Keratinocyte (primary cell): ENCODE measurements at regions of chr5 and their contacts with region 1.

Region 1: GRCh38 chr5:148909040-148909439 is 82.6 kb downstream of the ADRB2 start:
- DNase-seq: no peak
- H3K4me3 ChIP-seq: no peak overlapping the region
- H3K27ac ChIP-seq: peak overlapping the region; percentile 19
- H3K4me1 ChIP-seq: peaks cover 50% of the 10 kb centered on the region
- H3K27me3 ChIP-seq: no peaks in the 10 kb centered on the region
- CTCF ChIP-seq: no peak

Region 2: GRCh38 chr5:148939676-148940075 is 30.6 kb after region 1 on chr5:
- dilution Hi-C with region 1: no loop called
- DNase-seq: no peak
- H3K4me3 ChIP-seq: no peak overlapping the region
- H3K27ac ChIP-seq: peak overlapping the region; percentile 85
- H3K4me1 ChIP-seq: peaks cover 38% of the 10 kb centered on the region
- H3K27me3 ChIP-seq: no peaks in the 10 kb centered on the region
- CTCF ChIP-seq: no peak

Region 3: GRCh38 chr5:148991606-148992005 is 82.6 kb after region 1 on chr5:
- dilution Hi-C with region 1: no loop called
- DNase-seq: no peak
- H3K4me3 ChIP-seq: no peak overlapping the region
- H3K27ac ChIP-seq: peak overlapping the region; percentile 86
- H3K4me1 ChIP-seq: peaks cover 51% of the 10 kb centered on the region
- H3K27me3 ChIP-seq: no peaks in the 10 kb centered on the region
- CTCF ChIP-seq: no peak

Region 4: GRCh38 chr5:149002053-149002452 is 93.0 kb after region 1 on chr5:
- dilution Hi-C with region 1: loop called (anchors 5 kb)
- DNase-seq: no peak
- H3K4me3 ChIP-seq: no peak overlapping the region
- H3K27ac ChIP-seq: peak overlapping the region; percentile 34
- H3K4me1 ChIP-seq: peaks cover 25% of the 10 kb centered on the region
- H3K27me3 ChIP-seq: no peaks in the 10 kb centered on the region
- CTCF ChIP-seq: no peak

Region 5: DNA sequence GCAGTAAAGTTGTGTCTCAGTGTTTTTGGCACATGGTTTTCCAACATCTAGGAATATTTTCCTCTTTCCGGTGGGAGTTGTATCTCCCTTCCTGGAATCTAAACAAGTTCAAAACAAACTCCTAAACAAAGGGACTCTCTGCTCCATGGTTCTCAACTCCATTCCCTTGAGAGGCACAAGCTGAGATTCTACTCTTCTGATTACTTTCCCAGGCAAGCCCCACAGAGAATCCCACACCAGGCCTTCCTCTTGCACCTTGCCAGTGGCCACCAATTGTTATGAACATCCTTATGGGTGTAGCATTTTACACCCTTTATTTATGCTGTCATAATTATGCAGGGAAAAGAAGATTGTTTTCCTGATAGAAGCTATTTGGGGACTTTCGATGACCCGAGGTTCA is 179.6 kb after region 1 on chr5:
- dilution Hi-C with region 1: no loop called
- DNase-seq: no peak
- H3K4me3 ChIP-seq: no peak overlapping the region
- H3K27ac ChIP-seq: no peak overlapping the region
- H3K4me1 ChIP-seq: no peaks in the 10 kb centered on the region
- H3K27me3 ChIP-seq: no peaks in the 10 kb centered on the region
- CTCF ChIP-seq: no peak

Region 6: DNA sequence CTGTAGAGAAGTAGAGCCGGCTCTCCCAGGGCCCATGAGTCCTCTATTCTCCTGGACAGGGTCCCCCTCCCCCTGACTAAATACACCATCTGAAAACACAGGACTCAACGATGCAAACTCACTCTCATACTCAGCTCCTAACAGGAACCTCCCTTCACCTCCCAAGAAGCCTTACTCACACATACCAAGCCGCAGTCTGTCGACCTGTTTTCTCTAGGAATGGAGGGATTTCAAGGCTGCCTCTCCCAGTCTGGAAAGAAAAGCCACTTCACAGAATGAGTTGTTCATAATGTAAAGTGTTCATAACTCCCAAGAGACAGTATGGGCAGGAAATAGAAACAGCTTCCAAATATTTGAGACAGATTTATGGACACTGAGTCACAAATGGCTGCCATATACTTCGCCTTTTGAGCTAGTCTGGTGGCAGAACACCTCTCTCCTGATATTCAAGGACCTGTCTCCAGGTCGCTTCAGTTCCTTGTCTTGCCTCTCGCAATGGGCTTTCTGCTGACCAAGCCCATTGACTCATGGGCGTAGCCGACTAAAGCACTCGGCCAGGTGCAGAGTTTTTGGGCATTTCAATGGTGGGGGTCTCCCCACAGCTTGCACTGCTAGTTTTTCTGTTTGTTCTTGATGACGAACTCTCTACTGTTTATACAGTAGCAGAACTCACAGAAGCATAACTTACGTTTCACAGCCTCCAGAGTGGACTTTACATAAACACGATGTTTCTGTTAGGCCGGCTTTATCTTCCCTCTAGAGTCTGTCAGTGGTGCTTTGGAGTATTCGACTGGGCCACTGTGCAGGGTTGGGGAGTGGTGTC is 495.1 kb after region 1 on chr5:
- dilution Hi-C with region 1: no loop called
- DNase-seq: no peak
- H3K4me3 ChIP-seq: no peak overlapping the region
- H3K27ac ChIP-seq: no peak overlapping the region
- H3K4me1 ChIP-seq: no peaks in the 10 kb centered on the region
- H3K27me3 ChIP-seq: peaks cover 2% of the 10 kb centered on the region
- CTCF ChIP-seq: no peak